ENCODE measurements at regions of chr13 and their contacts with region 1.

Region 1: GRCh38 chr13:54934121-54934520 is 1905.5 kb downstream of the OLFM4 start:
- DNase-seq: no peak
- ATAC-seq: no peak
- H3K4me3 ChIP-seq: no peak overlapping the region
- H3K27ac ChIP-seq: no peak overlapping the region
- H3K4me1 ChIP-seq: no peaks in the 10 kb centered on the region
- H3K27me3 ChIP-seq: no peaks in the 10 kb centered on the region
- CTCF ChIP-seq: no peak

Region 2: DNA sequence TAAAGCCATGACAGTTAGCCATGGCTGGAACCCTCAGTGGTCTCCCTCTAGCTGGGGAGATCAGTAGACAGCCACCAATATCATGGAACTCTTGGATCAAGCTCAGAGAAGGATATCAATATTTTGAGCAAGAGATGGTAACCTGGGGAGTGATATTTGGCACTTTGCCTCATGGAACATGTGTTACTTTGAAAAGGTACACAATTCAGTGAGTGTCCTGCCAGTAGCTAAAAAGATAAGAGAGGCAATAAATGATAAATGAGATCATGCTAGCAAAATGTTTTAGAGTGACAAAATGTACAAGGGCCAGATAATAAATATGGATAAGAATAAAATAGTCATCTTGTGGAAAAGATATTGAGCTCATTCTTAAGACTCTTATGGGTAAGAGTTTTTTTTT is 286.8 kb before region 1 on chr13:
- intact Hi-C with region 1: no loop called
- DNase-seq: no peak
- ATAC-seq: no peak
- H3K4me3 ChIP-seq: no peak overlapping the region
- H3K27ac ChIP-seq: no peak overlapping the region
- H3K4me1 ChIP-seq: no peaks in the 10 kb centered on the region
- H3K27me3 ChIP-seq: no peaks in the 10 kb centered on the region
- CTCF ChIP-seq: no peak

Region 3: GRCh38 chr13:54901316-54901715 is 32.8 kb before region 1 on chr13:
- intact Hi-C with region 1: loop called in 1 of 2 experiments (anchors 2 kb)
- DNase-seq: no peak
- ATAC-seq: no peak
- H3K4me3 ChIP-seq: no peak overlapping the region
- H3K27ac ChIP-seq: no peak overlapping the region
- H3K4me1 ChIP-seq: no peaks in the 10 kb centered on the region
- H3K27me3 ChIP-seq: no peaks in the 10 kb centered on the region
- CTCF ChIP-seq: no peak

Measured in psoas muscle (tissue), 8 donors.